ENCODE measurements at regions of chr16 and their contacts with region 1.

Region 1: GRCh38 chr16:8868416-8869211 is at the start of gene CARHSP1:
- DNase-seq: peak; percentile 85 to 92
- H3K4me3 ChIP-seq: peak within 1 kb of the TSS; percentile 76 to 86
- H3K27ac ChIP-seq: peak within 1 kb of the TSS; percentile 81 to 85
- H3K4me1 ChIP-seq: peaks cover 0 to 58% (median 45%) of the 10 kb centered on the region in 4 donors
- H3K27me3 ChIP-seq: no peaks in the 10 kb centered on the region
- CTCF ChIP-seq: no peak

Region 2: GRCh38 chr16:8621572-8622314 is 246.9 kb before region 1 on chr16 and contains the start of gene METTL22:
- intact Hi-C with region 1: loop called (anchors 1 kb)
- DNase-seq: peak; percentile 88 to 92
- H3K4me3 ChIP-seq: peak within 1 kb of the TSS; percentile 80 to 89
- H3K27ac ChIP-seq: peak within 1 kb of the TSS; percentile 82 to 84
- H3K4me1 ChIP-seq: peaks cover 0 to 19% (median 11%) of the 10 kb centered on the region in 4 donors
- H3K27me3 ChIP-seq: no peaks in the 10 kb centered on the region
- CTCF ChIP-seq: no peak

Region 3: GRCh38 chr16:8674413-8675022 is 194.1 kb before region 1 on chr16 and contains the start of gene ABAT:
- intact Hi-C with region 1: loop called (anchors 5 kb)
- DNase-seq: peak; percentile 89 to 94
- H3K4me3 ChIP-seq: peak within 1 kb of the TSS; percentile 70 to 71
- H3K27ac ChIP-seq: peak within 1 kb of the TSS; percentile 39 to 66
- H3K4me1 ChIP-seq: peaks cover 0 to 17% (median 13%) of the 10 kb centered on the region in 4 donors
- H3K27me3 ChIP-seq: no peaks in the 10 kb centered on the region
- CTCF ChIP-seq: no peak

Region 4: DNA sequence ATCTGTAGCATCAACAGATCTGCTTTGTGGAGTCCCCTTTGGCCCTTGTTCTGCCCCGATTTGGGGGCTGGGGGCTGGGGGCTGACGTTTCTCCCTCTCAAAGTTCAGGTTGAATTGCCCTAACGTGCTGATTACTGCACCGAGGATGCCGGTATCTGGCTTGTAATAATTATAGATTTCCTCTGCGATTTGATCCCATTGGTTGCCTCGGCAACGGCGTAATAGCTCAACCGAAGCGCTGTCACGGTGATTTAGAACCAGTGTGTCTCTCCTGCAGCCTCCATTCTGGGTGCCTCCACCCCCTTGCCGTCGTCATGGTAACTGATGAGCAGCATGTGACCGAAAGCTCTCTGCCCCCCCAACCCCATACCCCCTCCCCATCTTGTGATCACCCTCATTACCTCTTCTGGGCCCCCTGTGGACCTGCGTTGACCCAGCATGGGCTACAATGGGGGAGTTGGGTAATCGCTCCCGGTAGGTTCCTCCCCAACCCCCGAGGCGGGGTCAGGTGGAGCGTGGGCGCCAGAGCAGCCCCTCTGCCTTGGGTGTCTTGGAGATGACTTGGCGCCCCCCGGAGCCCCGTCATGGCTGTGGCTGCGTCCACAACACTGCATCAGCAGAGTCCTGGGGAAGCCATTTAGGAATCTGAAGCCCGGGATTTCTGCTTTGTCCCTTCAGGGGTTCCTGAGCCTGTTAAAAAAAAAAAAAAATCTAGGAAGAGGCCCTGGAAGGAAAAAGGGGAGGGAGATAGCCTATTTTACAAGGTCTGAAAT is 155.8 kb before region 1 on chr16:
- intact Hi-C with region 1: no loop called
- DNase-seq: no peak
- H3K4me3 ChIP-seq: no peak overlapping the region
- H3K27ac ChIP-seq: no peak overlapping the region
- H3K4me1 ChIP-seq: no peaks in the 10 kb centered on the region
- H3K27me3 ChIP-seq: no peaks in the 10 kb centered on the region
- CTCF ChIP-seq: no peak

Region 5: DNA sequence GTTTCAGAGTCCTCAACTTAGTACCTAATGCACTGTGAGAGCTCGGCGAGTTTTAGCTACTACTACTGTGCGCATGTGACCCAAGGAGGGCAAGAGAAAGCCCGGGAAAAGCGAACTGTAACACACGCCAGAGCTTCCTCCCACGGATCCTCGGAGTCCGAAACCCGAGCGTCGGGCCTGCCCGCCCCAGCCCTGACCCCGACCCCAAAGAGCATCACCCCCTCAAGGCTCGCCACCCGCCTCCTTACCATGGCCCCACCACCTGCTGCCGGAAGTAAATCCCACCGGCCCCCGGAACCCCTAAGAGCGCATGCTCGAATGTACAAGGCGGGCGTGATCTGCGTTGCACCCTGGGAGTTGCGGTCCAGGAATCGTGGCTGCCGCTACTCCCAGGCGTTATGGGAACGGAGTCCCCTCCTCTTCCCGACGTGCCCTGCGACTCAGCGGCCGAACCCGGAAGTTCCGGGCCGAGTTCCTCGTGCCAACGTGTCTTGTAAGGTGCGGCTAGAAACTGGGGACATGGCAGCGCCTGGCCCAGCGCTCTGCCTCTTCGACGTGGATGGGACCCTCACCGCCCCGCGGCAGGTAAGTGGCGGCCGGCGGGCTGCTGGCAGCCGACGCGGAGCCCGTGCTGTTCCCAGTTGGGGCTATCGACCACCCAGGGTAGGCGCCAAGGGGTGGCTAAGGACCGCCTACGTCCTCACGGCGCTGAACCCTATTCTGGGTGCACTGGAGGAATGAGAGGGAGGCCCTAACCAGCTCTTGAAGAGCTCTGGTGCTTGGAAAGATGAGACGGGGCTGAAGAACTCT is 71.0 kb before region 1 on chr16 and contains the starts of genes PMM2 and TMEM186:
- intact Hi-C with region 1: loop called (anchors 5 kb)
- DNase-seq: peak; percentile 96 to 98
- H3K4me3 ChIP-seq: peak within 1 kb of the TSS; percentile 94 to 98
- H3K27ac ChIP-seq: peak within 1 kb of the TSS; percentile 83 to 86
- H3K4me1 ChIP-seq: peaks cover 0 to 62% (median 30%) of the 10 kb centered on the region in 4 donors
- H3K27me3 ChIP-seq: no peaks in the 10 kb centered on the region
- CTCF ChIP-seq: peak in 1 of 2 experiments; percentile 41

Region 6: DNA sequence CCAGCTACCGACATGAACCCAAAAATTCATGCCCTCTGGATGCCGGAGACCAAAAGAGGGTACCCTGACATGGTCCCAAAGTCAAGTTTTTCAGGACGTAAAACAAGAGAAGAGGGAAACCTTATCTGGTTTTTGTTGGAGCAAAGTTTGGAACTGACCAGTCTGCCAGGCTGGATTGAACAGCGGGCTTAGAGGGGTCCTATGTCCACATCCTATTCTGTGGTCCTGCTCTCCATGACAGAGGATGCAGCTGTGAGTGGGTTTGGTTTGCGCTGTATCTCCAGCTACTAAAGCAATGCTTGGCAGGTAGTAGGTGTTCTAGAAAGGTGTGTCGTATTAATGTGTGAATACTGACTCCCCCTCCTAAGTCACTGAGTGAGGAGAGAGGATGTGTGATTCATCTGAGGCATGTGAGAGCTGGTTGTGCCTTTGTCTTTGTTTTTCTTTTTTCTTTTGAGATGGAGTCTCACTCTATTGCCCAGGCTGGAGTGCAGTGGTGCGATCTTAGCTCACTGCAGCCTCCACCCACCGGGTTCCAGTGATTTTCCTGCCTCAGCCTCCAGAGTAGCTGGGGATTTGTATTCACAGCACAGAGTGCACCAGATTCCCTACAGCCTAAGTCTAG is 40.0 kb before region 1 on chr16:
- intact Hi-C with region 1: no loop called
- DNase-seq: no peak
- H3K4me3 ChIP-seq: no peak overlapping the region
- H3K27ac ChIP-seq: no peak overlapping the region
- H3K4me1 ChIP-seq: no peaks in the 10 kb centered on the region
- H3K27me3 ChIP-seq: no peaks in the 10 kb centered on the region
- CTCF ChIP-seq: no peak

Region 7: GRCh38 chr16:8963825-8964441 is 95.3 kb after region 1 on chr16 and contains the start of gene USP7:
- intact Hi-C with region 1: loop called (anchors 10 kb)
- DNase-seq: peak; percentile 94 to 95
- H3K4me3 ChIP-seq: peak within 1 kb of the TSS; percentile 80 to 81
- H3K27ac ChIP-seq: peak within 1 kb of the TSS; percentile 80 to 86
- H3K4me1 ChIP-seq: peaks cover 0 to 42% (median 36%) of the 10 kb centered on the region in 4 donors
- H3K27me3 ChIP-seq: no peaks in the 10 kb centered on the region
- CTCF ChIP-seq: no peak

Region 8: DNA sequence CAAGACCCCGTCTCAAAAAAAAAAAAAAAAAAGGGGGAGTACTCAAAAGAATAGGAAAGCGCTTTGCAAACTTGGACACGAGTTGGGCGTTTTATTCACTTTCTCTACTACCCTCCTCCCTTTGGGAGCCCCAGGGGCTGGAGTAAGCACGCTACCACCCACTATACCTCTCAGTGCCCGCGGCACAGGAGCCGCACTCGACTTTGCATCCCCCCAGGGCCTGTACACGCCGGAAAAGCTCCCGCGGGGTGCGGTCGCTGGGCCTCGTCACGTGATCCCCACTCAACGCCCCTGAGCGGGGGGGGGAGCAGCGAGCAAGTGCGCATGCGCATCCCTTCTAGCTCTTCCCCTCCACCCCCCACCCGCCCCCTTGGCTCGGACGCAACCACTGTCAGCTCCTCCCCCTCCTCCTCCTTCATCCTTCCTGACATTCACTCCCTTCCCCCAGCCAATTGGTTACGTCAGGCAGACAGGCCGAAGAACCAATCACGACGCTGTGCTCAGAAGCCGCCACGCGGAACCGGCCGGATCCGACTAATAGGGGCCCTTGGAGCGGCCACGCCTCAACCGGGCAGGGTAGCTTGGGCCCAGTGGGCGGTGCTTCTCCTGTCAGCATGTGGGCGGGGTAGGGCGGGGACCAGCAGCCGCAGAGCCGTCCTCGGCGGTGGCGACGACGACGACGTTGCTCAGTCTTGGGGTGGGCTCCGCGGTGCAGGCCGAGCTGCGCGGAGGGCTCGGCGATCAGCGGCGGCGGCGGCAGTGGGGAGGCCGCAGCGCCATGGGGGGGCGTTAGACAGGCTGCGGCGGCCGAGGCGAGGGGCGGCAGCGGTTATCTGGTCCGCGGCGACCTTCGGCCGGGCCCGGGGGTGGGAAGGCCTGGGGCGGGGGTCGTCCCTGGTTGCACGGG is 222.6 kb after region 1 on chr16 and contains the start of gene HAPSTR1:
- intact Hi-C with region 1: loop called (anchors 10 kb)
- DNase-seq: peak; percentile 100
- H3K4me3 ChIP-seq: peak within 1 kb of the TSS; percentile 65 to 84
- H3K27ac ChIP-seq: peak within 1 kb of the TSS; percentile 98 to 99
- H3K4me1 ChIP-seq: peaks cover 0 to 40% (median 28%) of the 10 kb centered on the region in 4 donors
- H3K27me3 ChIP-seq: no peaks in the 10 kb centered on the region
- CTCF ChIP-seq: no peak